Activated CD8-positive, alpha-beta memory T cell treated with anti-CD3 and anti-CD28 coated beads, Interleukin-2, amount 10 ng/mL, durations not matched to agents 7 days and 5 days (primary cell): ENCODE measurements at regions of chr17 and their contacts with region 1.

Region 1: DNA sequence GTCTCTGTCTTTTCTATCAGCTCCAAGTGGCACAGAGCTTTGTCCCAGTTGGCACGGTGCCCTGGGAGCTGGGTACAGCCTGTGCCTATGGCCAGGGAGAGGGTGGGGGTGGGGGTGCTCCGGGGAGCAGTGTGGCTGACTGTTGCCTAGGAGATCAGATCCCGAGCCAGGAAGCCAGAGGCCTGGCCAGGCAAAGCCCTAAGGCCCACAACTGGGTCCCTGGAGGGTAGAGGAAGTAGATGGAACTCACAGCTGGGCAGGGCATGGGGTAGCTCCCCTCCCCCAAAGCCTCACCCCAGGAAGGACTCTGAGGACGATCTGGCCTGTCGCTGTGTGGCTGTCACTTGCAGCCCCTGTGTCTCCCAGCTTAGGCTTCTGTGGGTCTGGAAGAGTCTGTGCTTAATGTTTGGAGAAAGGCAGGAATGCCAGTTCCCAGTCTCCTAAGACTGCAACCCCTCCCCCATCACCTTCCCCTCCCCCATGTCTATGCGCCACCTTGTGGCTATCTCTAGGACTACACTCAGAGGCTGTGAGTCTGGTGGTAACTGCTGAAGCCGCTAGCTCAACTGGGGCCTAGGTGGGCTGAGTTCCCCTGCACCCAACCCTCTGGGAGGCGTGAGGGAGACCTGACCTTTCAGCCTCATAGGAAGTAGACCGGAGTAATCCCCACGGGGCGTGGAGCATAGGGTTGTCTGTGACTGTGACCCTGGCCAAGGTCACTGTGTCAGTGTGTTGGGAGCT is 12.6 kb downstream of the THRA start:
- DNase-seq: peak; percentile 72
- ATAC-seq: peak; percentile 81
- H3K4me3 Mint-ChIP-seq: no peak overlapping the region
- H3K27ac Mint-ChIP-seq: peak overlapping the region; percentile 62
- H3K4me1 Mint-ChIP-seq: peaks cover 11% of the 10 kb centered on the region
- H3K27me3 Mint-ChIP-seq: no peaks in the 10 kb centered on the region

Region 2: GRCh38 chr17:40019140-40019991 is 56.0 kb before region 1 on chr17:
- CTCF ChIA-PET with region 1: interaction called, 28 read pairs
- DNase-seq: no peak
- ATAC-seq: no peak
- H3K4me3 Mint-ChIP-seq: no peak overlapping the region
- H3K27ac Mint-ChIP-seq: no peak overlapping the region
- H3K4me1 Mint-ChIP-seq: no peaks in the 10 kb centered on the region
- H3K27me3 Mint-ChIP-seq: no peaks in the 10 kb centered on the region

Region 3: DNA sequence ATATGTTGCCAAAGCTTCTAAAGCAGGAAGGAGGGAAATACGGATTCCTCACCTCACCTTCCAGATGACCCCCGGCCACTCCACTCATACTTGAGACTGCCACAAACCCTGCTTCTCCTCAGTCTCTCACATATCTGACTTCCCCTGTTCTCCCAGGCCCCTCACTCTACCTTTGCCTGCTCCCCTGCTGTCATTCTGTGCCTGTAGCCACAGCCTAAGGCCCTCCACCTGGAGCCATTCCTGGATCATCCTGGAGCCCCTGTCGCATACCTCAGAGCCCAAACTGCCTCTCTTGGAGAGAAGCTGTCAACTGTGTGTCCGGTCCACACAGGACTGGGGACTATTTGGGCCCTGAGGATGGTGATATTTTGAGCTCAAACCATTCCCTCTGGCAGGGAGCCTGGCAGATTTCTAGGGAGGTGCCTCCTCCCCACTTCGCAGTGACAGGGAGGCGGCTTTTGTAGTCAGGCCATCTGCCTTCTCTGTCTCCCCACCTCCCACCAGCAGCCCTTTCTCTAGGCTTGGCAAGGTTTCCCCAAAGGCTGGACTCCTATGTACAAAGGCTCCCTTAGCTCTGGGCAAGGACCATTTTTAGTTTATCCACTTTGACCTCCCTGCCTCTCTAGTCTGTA is 18.9 kb before region 1 on chr17:
- CTCF ChIA-PET with region 1: interaction called, 85 read pairs
- DNase-seq: no peak
- ATAC-seq: no peak
- H3K4me3 Mint-ChIP-seq: no peak overlapping the region
- H3K27ac Mint-ChIP-seq: no peak overlapping the region
- H3K4me1 Mint-ChIP-seq: peaks cover 23% of the 10 kb centered on the region
- H3K27me3 Mint-ChIP-seq: peaks cover 12% of the 10 kb centered on the region

Region 4: GRCh38 chr17:40086150-40087044 is 11.0 kb after region 1 on chr17:
- CTCF ChIA-PET with region 1: interaction called, 59 read pairs
- DNase-seq: peak; percentile 66
- ATAC-seq: peak; percentile 63
- H3K4me3 Mint-ChIP-seq: no peak overlapping the region
- H3K27ac Mint-ChIP-seq: no peak overlapping the region
- H3K4me1 Mint-ChIP-seq: no peaks in the 10 kb centered on the region
- H3K27me3 Mint-ChIP-seq: no peaks in the 10 kb centered on the region

Region 5: GRCh38 chr17:40098846-40099618 is 23.7 kb after region 1 on chr17:
- CTCF ChIA-PET with region 1: interaction called, 23 read pairs
- DNase-seq: peak; percentile 99
- ATAC-seq: peak; percentile 65
- H3K4me3 Mint-ChIP-seq: peak overlapping the region; percentile 73
- H3K27ac Mint-ChIP-seq: peak overlapping the region; percentile 85
- H3K4me1 Mint-ChIP-seq: peaks cover 86% of the 10 kb centered on the region
- H3K27me3 Mint-ChIP-seq: no peaks in the 10 kb centered on the region

Region 6: GRCh38 chr17:40168262-40168832 is 93.0 kb after region 1 on chr17:
- CTCF ChIA-PET with region 1: interaction called, 13 read pairs
- DNase-seq: peak; percentile 56
- ATAC-seq: peak; percentile 58
- H3K4me3 Mint-ChIP-seq: no peak overlapping the region
- H3K27ac Mint-ChIP-seq: peak overlapping the region; percentile 53
- H3K4me1 Mint-ChIP-seq: peaks cover 3% of the 10 kb centered on the region
- H3K27me3 Mint-ChIP-seq: no peaks in the 10 kb centered on the region

Region 7: GRCh38 chr17:40203131-40203530 is 127.8 kb after region 1 on chr17:
- CTCF ChIA-PET with region 1: no interaction called
- DNase-seq: no peak
- ATAC-seq: no peak
- H3K4me3 Mint-ChIP-seq: no peak overlapping the region
- H3K27ac Mint-ChIP-seq: no peak overlapping the region
- H3K4me1 Mint-ChIP-seq: peaks cover 7% of the 10 kb centered on the region
- H3K27me3 Mint-ChIP-seq: peaks cover 6% of the 10 kb centered on the region